ENCODE measurements at regions of chr5 and their contacts with region 1.

Region 1: DNA sequence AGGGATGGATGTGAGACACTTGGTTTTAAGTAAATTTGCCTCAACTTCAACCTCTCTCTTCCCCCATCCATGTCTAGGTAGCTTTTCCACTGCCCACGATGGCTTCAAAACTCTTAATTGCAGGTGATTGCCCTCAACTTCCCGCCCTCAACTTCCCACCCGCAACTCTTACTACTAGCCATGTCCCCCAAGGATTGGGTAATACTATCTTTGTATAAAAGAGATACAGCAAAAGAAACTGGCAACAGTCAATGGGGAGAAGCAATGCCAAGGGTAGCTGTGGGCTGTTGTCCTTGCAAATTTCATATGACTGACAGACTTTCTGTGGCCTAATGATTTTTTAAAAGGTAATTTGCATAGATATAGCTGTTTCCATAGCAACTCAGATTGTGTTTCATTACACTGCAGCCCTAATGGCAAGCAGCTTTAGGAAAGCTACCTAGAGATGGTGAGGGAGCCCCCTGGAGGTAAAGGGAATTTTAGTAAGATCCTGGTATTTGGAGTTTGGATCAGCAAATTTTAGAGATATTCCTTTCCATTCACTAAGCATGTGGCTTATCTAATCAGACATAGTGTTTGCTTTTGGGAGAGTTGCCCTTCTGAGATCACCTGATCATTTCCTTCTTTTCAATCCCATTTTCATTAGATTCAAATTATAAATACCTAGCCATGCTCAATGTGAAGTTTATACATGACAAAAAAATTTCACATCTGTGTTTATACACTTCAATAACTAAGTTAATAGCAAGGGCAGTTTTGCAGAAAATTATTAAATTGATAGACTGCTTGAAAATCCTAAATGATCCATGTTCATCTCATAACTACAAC is 421.6 kb upstream of the DAP start:
- DNase-seq: no peak
- ATAC-seq: peak in 2 of 8 donors; percentile 22 to 29
- H3K4me3 ChIP-seq: no peak overlapping the region
- H3K27ac ChIP-seq: no peak overlapping the region
- H3K4me1 ChIP-seq: peaks cover 0 to 7% (median 0%) of the 10 kb centered on the region in 9 donors
- H3K27me3 ChIP-seq: no peaks in the 10 kb centered on the region
- CTCF ChIP-seq: peak in 8 of 9 donors; percentile 22 to 60 (median 48)

Region 2: GRCh38 chr5:10701567-10702039 is 481.1 kb before region 1 on chr5:
- intact Hi-C with region 1: loop called in 5 of 10 experiments (anchors 5 to 10 kb)
- DNase-seq: peak in 1 of 2 donors; percentile 60
- ATAC-seq: peak in 6 of 8 donors; percentile 28 to 57 (median 39)
- H3K4me3 ChIP-seq: no peak overlapping the region
- H3K27ac ChIP-seq: peak overlapping the region in 7 of 10 donors; percentile 7 to 57 (median 24)
- H3K4me1 ChIP-seq: peaks cover 9 to 48% (median 39%) of the 10 kb centered on the region in 9 donors
- H3K27me3 ChIP-seq: no peaks in the 10 kb centered on the region
- CTCF ChIP-seq: peak; percentile 47 to 80 (median 76)

Region 3: GRCh38 chr5:10856683-10857337 is 325.8 kb before region 1 on chr5:
- intact Hi-C with region 1: loop called in 2 of 10 experiments (anchors 10 kb)
- DNase-seq: peak; percentile 25 to 49
- ATAC-seq: peak in 7 of 8 donors; percentile 34 to 76 (median 63)
- H3K4me3 ChIP-seq: peak overlapping the region in 4 of 10 donors; percentile 7 to 30 (median 23)
- H3K27ac ChIP-seq: no peak overlapping the region
- H3K4me1 ChIP-seq: peaks cover 0 to 36% (median 0%) of the 10 kb centered on the region in 9 donors
- H3K27me3 ChIP-seq: peaks cover 0 to 16% (median 9%) of the 10 kb centered on the region in 7 donors
- CTCF ChIP-seq: peak; percentile 45 to 83 (median 78)

Region 4: GRCh38 chr5:10863763-10864383 is 318.8 kb before region 1 on chr5:
- intact Hi-C with region 1: loop called in 2 of 10 experiments (anchors 10 kb)
- DNase-seq: peak; percentile 26 to 38
- ATAC-seq: peak in 4 of 8 donors; percentile 52 to 70 (median 60)
- H3K4me3 ChIP-seq: no peak overlapping the region
- H3K27ac ChIP-seq: no peak overlapping the region
- H3K4me1 ChIP-seq: no peaks in the 10 kb centered on the region
- H3K27me3 ChIP-seq: peaks cover 0 to 4% (median 0%) of the 10 kb centered on the region in 7 donors
- CTCF ChIP-seq: peak; percentile 45 to 90 (median 68)

Region 5: GRCh38 chr5:10987930-10988504 is 194.6 kb before region 1 on chr5:
- intact Hi-C with region 1: loop called in 6 of 10 experiments (anchors 5 to 10 kb)
- DNase-seq: peak; percentile 75 to 77
- ATAC-seq: peak; percentile 80 to 94 (median 88)
- H3K4me3 ChIP-seq: no peak overlapping the region
- H3K27ac ChIP-seq: peak overlapping the region in 5 of 10 donors; percentile 44 to 85 (median 77)
- H3K4me1 ChIP-seq: peaks cover 3 to 25% (median 11%) of the 10 kb centered on the region in 9 donors
- H3K27me3 ChIP-seq: peaks cover 0 to 9% (median 0%) of the 10 kb centered on the region in 7 donors
- CTCF ChIP-seq: peak; percentile 53 to 81 (median 74)

Region 6: DNA sequence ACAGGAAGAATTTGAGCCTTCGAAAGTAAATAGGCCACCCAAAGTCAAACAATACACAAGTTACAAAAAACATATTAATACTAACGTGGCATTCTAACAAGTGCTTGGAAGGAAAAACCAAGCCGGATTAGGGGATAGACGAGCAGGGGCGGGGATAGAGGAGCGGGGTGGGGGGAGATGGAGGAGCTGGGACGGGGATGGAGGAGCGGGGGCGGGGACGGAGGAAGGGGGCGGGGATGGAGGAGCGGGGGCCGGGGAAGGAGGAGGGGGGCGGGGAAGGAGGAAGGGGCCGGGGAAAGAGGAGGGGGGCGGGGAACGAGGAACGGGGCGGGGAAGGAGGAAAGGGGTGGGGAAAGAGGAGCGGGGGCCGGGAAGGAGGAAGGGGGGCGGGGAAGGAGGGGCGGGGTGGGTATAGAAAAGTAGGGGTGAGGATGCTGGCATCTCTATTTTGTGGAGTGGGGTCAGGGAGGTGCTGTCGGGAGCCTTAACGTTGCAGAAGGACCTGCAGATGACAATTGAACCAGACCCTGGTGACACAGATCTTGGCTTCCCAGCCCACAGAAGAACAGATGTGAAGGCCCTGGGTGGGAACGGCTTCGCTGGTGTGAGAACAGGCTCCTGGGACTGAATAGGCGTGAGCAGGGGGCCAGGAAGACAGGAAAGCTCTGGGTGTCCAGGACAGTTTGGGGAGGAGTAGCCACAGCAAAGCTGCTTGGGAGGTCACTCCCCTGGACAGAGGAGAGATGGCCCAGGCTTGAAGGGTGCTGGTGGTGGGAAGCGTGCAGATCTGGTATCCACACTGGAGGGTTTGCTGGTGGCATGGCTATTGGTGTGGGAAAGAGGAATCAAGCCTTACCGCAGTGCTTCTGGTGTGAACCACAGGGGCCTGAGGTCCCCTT is 188.3 kb before region 1 on chr5:
- intact Hi-C with region 1: loop called in 6 of 10 experiments (anchors 5 to 10 kb)
- DNase-seq: no peak
- ATAC-seq: no peak
- H3K4me3 ChIP-seq: no peak overlapping the region
- H3K27ac ChIP-seq: no peak overlapping the region
- H3K4me1 ChIP-seq: peaks cover 0 to 13% (median under 1%) of the 10 kb centered on the region in 9 donors
- H3K27me3 ChIP-seq: no peaks in the 10 kb centered on the region
- CTCF ChIP-seq: no peak